Calu3 (cell line): ENCODE measurements at regions of chr17 and their contacts with region 1.

Region 1: GRCh38 chr17:40551879-40552768 is 13.1 kb downstream of the CCR7 start:
- DNase-seq: no peak
- H3K4me3 Mint-ChIP-seq: no peak overlapping the region
- H3K27ac Mint-ChIP-seq: no peak overlapping the region
- H3K4me1 Mint-ChIP-seq: peaks cover 20% of the 10 kb centered on the region
- H3K27me3 Mint-ChIP-seq: peaks cover 60% of the 10 kb centered on the region
- CTCF ChIP-seq: no peak

Region 2: GRCh38 chr17:39647256-39647655 is 904.9 kb before region 1 on chr17:
- CTCF ChIA-PET with region 1: no interaction called
- intact Hi-C with region 1: no loop called
- DNase-seq: peak; percentile 70
- H3K4me3 Mint-ChIP-seq: no peak overlapping the region
- H3K27ac Mint-ChIP-seq: no peak overlapping the region
- H3K4me1 Mint-ChIP-seq: peaks cover 33% of the 10 kb centered on the region
- H3K27me3 Mint-ChIP-seq: no peaks in the 10 kb centered on the region
- CTCF ChIP-seq: no peak

Region 3: DNA sequence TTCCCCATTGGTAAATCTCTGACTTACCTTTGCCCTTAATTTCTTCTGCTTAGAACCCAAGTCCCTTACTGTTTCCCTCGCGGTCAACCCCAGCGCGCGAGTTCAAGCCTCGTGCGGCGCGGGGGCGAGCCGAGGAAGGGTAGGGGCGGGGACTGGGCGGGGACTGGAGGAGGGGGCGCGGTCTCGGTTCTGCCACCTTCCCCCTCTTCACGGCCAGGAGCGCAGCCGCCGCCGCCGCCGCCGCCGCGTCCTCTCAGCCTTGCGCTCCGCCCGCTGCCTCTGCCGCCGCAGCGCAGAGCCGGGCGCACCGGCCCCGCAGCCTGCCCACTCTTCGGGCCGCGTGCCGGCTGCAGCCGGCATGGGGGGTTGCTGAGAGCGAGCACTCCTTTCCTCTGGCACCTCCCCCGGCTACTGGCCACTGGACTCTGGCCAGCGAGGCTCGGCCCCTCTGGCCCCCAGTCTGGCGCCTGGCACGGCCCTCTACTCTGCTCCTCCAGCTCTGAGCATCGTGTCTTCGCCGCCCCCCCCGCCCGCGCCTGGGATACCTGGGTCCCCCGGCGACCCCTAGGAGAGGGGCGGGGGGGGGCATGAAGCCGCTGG is 374.7 kb before region 1 on chr17 and contains the start of gene RAPGEFL1:
- CTCF ChIA-PET with region 1: no interaction called
- intact Hi-C with region 1: no loop called
- DNase-seq: peak; percentile 100
- H3K4me3 Mint-ChIP-seq: peak within 1 kb of the TSS; percentile 76
- H3K27ac Mint-ChIP-seq: peak within 1 kb of the TSS; percentile 61
- H3K4me1 Mint-ChIP-seq: peaks cover 51% of the 10 kb centered on the region
- H3K27me3 Mint-ChIP-seq: no peaks in the 10 kb centered on the region
- CTCF ChIP-seq: no peak
- total RNA-seq, gene RAPGEFL1: 57.9 and 86.3 TPM in 2 replicates

Region 4: DNA sequence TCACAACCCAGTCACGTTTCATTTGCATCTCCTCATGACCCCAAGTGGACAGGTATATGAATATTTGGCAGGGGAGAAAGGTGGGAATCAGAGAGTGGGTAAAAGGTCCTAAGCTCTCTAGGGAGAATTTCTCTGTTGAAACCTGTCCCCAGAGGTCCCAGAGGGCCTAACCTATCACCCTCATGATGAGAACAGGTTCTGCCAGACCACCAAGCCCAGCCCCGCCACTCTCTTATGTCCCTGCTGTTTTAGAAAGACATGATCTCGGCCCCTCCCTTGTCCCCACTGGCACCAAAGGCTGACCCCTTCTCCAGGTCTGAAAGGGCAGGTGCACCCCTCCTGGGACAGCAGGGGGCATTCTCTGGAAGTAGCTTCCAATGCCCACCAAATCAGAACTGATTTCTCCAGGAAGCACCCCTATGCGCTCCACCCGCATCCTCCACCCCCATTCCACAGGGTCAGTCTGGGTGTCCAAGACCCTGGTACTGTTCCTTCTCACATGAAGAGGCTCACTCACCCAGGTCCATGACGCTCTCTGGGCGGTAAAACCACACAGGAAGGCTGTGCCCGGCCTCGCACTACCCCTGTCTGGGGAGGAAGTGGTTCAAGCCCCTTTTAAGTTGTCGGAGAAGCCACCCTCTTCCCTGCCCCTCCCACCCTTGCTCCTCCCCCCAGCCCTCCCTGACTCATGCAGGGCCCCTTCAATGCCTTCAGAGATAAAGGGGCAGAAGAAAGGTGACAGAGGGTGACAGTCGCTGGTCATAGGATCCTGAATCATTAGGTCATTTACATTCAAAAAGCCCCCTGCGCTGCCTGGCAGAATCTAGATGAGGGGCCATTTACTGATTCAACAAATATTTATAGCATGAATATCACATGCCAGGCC is 13.0 kb after region 1 on chr17 and contains the start of gene CCR7:
- CTCF ChIA-PET with region 1: interaction called, 187 read pairs
- intact Hi-C with region 1: no loop called
- DNase-seq: peak; percentile 43
- H3K4me3 Mint-ChIP-seq: no peak within 1 kb of the TSS
- H3K27ac Mint-ChIP-seq: no peak within 1 kb of the TSS
- H3K4me1 Mint-ChIP-seq: peaks cover 11% of the 10 kb centered on the region
- H3K27me3 Mint-ChIP-seq: peaks cover 93% of the 10 kb centered on the region
- CTCF ChIP-seq: no peak
- total RNA-seq, gene CCR7: not detected in 2 replicates

Region 5: GRCh38 chr17:40671282-40671681 is 119.2 kb after region 1 on chr17:
- CTCF ChIA-PET with region 1: interaction called, 7 read pairs
- intact Hi-C with region 1: loop called (anchors 1 kb)
- DNase-seq: peak; percentile 19
- H3K4me3 Mint-ChIP-seq: no peak overlapping the region
- H3K27ac Mint-ChIP-seq: no peak overlapping the region
- H3K4me1 Mint-ChIP-seq: peaks cover 5% of the 10 kb centered on the region
- H3K27me3 Mint-ChIP-seq: peaks cover 82% of the 10 kb centered on the region
- CTCF ChIP-seq: no peak